Common myeloid progenitor, CD34-positive (primary cell): ENCODE measurements at regions of chr11 and their contacts with region 1.

Region 1: DNA sequence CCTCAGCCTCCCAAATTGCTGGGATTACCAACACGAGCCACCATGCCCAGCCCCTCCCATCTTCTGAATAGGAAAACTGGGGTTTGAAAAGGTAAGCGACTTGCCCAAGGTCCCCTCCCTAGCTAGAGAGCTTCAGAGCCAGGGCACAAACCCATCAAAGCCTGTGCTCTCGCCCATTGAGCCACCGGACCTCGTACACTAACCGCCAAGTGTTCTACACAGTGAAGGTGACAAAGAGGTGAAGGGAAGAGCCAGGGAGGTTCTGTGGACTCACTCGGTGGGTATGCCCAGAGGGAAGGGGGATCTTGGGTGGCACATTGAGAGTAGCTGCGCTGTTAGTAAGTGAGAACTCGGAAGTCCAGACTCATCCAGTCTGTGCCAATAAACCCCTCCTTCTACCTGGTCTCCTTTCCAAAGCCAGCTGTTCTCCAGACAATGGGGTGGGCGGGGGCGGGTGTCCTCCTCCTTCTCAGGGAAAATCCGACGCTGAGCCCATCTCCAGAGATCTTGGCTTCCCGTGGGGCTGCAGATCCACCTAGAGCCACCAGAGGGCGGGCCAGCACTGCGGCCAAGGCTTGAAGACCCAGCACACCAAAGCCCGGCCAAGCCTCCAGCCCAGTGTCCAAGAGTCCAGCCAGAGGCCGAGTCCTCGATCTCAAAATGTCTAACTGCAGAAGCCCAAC is 3.2 kb upstream of the RTN4RL2 start:
- DNase-seq: peak; percentile 63 to 70 (median 64)
- H3K4me3 ChIP-seq: peak overlapping the region in 2 of 7 experiments; percentile 12 to 43
- H3K27ac ChIP-seq: no peak overlapping the region
- H3K4me1 ChIP-seq: peaks cover 0 to 41% (median 36%) of the 10 kb centered on the region in 4 experiments
- H3K27me3 ChIP-seq: peaks cover 3 to 46% (median 18%) of the 10 kb centered on the region in 5 experiments

Region 2: DNA sequence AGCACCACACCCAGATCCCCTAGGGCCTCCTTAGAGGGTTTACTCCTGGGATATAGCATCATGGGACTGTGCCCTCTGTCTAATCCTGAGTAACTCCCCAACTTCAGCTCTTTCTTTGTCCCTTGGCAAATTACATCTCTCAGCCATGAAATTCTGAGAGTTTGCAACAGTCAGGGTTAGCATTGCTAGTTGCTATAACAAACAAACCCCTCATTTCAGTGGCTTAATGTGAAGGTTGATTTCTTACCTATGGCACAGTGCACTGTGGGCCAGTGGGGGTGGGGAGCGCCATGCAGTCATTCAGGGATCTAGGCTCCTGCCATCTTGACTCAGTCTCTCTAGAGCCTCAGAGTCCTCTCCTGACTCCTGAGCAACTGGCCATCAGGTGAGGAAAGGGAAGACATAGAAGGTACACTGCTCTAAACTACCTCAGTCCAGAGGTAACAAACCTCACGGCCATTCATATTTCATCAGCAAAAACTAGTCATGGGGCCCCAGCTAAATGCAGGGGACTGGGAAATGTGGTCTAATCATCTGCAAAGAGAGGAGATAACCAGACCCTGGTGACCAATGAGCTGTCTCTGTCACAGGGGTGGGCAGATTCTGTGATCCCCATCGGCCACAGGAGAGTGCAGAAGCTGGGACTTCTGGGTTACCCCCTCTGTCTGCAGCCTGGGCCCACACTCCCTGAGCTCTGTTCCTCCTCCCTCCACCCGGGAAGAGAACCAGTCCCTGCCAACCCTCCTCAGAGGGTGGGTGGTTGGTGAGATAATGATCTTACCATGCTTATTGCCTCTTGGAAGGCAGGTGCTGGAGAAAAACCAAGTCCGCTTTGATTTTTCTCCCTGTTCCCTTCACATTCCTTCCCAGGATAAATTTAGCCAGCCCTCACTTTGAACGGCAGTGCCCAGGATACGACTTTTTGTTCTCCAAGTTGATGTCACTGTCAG is 93.7 kb before region 1 on chr11:
- CTCF ChIA-PET with region 1: interaction called, 10 read pairs
- POLR2A ChIA-PET with region 1: no interaction called
- DNase-seq: no peak
- H3K4me3 ChIP-seq: no peak overlapping the region
- H3K27ac ChIP-seq: no peak overlapping the region
- H3K4me1 ChIP-seq: peaks cover 1 to 49% (median 16%) of the 10 kb centered on the region in 4 experiments
- H3K27me3 ChIP-seq: no peaks in the 10 kb centered on the region

Region 3: GRCh38 chr11:57432714-57433163 is 24.4 kb before region 1 on chr11:
- CTCF ChIA-PET with region 1: interaction called, 48 read pairs
- POLR2A ChIA-PET with region 1: no interaction called
- DNase-seq: peak; percentile 91 to 97 (median 97)
- H3K4me3 ChIP-seq: peak overlapping the region in 3 of 7 experiments; percentile 5 to 37 (median 18)
- H3K27ac ChIP-seq: peak overlapping the region in 1 of 2 experiments; percentile 41
- H3K4me1 ChIP-seq: peaks cover 6 to 48% (median 19%) of the 10 kb centered on the region in 4 experiments
- H3K27me3 ChIP-seq: no peaks in the 10 kb centered on the region

Region 4: GRCh38 chr11:57474017-57474802 is 17.1 kb after region 1 on chr11:
- CTCF ChIA-PET with region 1: interaction called, 211 read pairs
- POLR2A ChIA-PET with region 1: interaction called, 4 read pairs
- DNase-seq: peak; percentile 73 to 90 (median 89)
- H3K4me3 ChIP-seq: peak overlapping the region in 4 of 7 experiments; percentile 32 to 57 (median 50)
- H3K27ac ChIP-seq: peak overlapping the region in 1 of 2 experiments; percentile 30
- H3K4me1 ChIP-seq: peaks cover 7 to 44% (median 39%) of the 10 kb centered on the region in 4 experiments
- H3K27me3 ChIP-seq: no peaks in the 10 kb centered on the region

Region 5: GRCh38 chr11:57493507-57494503 is 36.7 kb after region 1 on chr11:
- CTCF ChIA-PET with region 1: interaction called, 13 read pairs
- POLR2A ChIA-PET with region 1: no interaction called
- DNase-seq: peak; percentile 51 to 56 (median 54)
- H3K4me3 ChIP-seq: no peak overlapping the region
- H3K27ac ChIP-seq: no peak overlapping the region
- H3K4me1 ChIP-seq: no peaks in the 10 kb centered on the region
- H3K27me3 ChIP-seq: no peaks in the 10 kb centered on the region

Region 6: GRCh38 chr11:57644748-57645688 is 187.9 kb after region 1 on chr11:
- CTCF ChIA-PET with region 1: interaction called, 14 read pairs
- POLR2A ChIA-PET with region 1: no interaction called
- DNase-seq: peak; percentile 82 to 88 (median 87)
- H3K4me3 ChIP-seq: no peak overlapping the region
- H3K27ac ChIP-seq: no peak overlapping the region
- H3K4me1 ChIP-seq: peaks cover 21 to 93% (median 66%) of the 10 kb centered on the region in 4 experiments
- H3K27me3 ChIP-seq: peaks cover 0 to 41% (median 19%) of the 10 kb centered on the region in 5 experiments